ENCODE measurements at regions of chr3 and their contacts with region 1.

Region 1: DNA sequence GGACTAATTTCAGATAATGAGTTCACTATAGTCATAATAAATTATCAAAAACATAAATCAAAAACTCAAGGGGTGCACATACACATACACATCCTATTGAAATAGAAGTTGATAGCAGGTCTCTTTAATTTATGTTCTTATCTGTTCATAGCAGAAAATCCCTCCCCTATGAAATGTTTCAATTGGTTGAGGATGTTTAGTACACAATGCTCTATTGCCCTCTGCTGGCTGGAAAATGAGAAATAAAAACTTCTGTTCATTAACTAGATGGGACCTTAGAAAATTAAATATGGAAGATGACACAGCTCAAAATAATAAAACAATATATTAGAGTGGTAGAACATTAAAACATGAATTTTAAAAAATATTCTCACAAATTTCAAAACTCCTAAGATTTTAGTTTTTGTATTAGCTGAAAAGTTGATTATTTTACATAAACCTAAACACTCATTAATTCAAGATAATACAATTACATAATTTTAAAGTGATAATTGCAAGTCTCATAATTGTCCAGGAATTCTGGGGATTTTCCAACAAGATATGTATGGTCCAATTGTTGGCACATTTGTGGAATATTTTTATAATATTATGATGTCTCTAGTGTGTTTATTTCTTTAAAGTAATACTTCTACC is 735.0 kb downstream of the ROBO1 start:
- DNase-seq: no peak
- H3K4me3 ChIP-seq: no peak overlapping the region
- H3K27ac ChIP-seq: no peak overlapping the region
- H3K4me1 ChIP-seq: no peaks in the 10 kb centered on the region
- H3K27me3 ChIP-seq: peaks cover 0 to 9% of the 10 kb centered on the region in 2 donors
- CTCF ChIP-seq: peak; percentile 58 to 79 (median 66)
- POLR2A ChIP-seq: no peak

Region 2: DNA sequence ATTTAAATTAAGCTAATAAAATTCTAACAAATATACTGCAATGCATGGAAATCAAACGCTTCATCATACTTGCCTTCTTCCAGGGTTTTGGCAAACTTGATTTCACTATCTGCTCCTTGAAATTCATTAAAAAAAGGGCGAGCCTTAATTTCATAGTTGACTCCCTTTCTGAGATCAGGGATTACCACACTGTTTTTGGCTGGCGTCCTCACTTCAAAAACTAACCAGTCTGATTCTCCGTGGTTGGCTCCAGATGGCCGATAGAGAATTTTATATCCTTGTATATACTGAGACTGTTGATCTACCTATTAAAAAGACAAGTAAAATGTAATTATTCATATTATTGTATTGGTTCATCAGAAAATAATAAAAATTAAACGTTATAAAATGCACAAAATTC is 371.8 kb before region 1 on chr3:
- intact Hi-C with region 1: loop called (anchors 5 kb)
- DNase-seq: peak; percentile 26 to 43
- H3K4me3 ChIP-seq: no peak overlapping the region
- H3K27ac ChIP-seq: no peak overlapping the region
- H3K4me1 ChIP-seq: no peaks in the 10 kb centered on the region
- H3K27me3 ChIP-seq: no peaks in the 10 kb centered on the region
- CTCF ChIP-seq: no peak
- POLR2A ChIP-seq: no peak

Region 3: DNA sequence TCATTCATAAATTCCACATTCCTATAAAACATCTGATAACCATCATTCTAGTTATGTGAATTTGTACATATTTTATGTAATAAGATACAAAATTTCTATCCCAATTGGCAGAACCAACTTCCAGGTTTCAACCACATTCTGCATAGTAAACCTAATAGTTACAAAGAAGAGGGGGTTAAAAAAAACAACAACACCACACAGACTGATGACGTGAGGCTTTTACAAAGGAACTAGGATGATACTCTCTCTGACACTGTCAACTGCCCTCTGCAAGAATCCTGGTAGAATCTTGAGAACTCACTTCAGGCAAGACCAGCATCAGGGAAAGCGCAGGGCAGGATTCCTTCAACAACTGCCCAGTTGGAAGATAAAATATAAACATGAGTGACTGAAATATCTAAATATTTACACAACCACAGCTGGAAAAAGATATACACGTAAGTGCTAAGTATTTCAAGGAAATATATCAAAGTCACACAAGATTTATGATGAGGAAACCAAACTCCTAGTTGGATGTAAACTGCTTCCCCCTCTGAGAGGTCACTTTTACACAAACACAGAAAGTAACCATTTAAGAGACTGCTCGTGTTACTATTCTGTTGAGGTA is 81.4 kb before region 1 on chr3:
- intact Hi-C with region 1: no loop called
- DNase-seq: no peak
- H3K4me3 ChIP-seq: no peak overlapping the region
- H3K27ac ChIP-seq: no peak overlapping the region
- H3K4me1 ChIP-seq: no peaks in the 10 kb centered on the region
- H3K27me3 ChIP-seq: no peaks in the 10 kb centered on the region
- CTCF ChIP-seq: no peak
- POLR2A ChIP-seq: no peak

Region 4: DNA sequence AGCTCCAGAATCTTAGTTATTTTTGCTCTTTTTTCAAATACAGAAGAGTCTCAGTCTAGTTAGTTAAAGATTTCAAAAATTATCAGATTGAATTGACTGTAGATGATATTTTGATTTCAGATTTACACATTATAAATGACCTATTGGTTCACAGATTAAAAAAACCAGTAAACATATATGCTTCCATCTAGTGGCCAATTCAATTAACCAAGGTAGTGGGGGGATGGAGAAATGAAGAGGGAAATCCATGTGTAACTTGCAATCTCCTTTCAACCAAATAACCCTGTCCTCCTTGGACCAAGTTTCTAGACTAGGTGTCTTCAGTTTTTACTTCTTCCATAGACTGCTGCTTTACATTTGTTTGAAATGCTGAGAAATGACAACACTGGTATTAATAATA is 54.8 kb before region 1 on chr3:
- intact Hi-C with region 1: no loop called
- DNase-seq: no peak
- H3K4me3 ChIP-seq: no peak overlapping the region
- H3K27ac ChIP-seq: no peak overlapping the region
- H3K4me1 ChIP-seq: no peaks in the 10 kb centered on the region
- H3K27me3 ChIP-seq: no peaks in the 10 kb centered on the region
- CTCF ChIP-seq: no peak
- POLR2A ChIP-seq: no peak

Measured in uterus (tissue), 4 donors.